Activated CD4-positive, alpha-beta T cell treated with anti-CD3 and anti-CD28 coated beads, Interleukin-2, amount 10 ng/mL, durations not matched to agents 7 days and 5 days (primary cell): ENCODE measurements at regions of chr6 and their contacts with region 1.

Region 1: GRCh38 chr6:43774776-43775534 is 4.9 kb downstream of the VEGFA start:
- DNase-seq: peak; percentile 72
- H3K4me3 Mint-ChIP-seq: no peak overlapping the region
- H3K27ac Mint-ChIP-seq: peak overlapping the region; percentile 60
- H3K4me1 Mint-ChIP-seq: peaks cover 45% of the 10 kb centered on the region
- H3K27me3 Mint-ChIP-seq: no peaks in the 10 kb centered on the region

Region 2: DNA sequence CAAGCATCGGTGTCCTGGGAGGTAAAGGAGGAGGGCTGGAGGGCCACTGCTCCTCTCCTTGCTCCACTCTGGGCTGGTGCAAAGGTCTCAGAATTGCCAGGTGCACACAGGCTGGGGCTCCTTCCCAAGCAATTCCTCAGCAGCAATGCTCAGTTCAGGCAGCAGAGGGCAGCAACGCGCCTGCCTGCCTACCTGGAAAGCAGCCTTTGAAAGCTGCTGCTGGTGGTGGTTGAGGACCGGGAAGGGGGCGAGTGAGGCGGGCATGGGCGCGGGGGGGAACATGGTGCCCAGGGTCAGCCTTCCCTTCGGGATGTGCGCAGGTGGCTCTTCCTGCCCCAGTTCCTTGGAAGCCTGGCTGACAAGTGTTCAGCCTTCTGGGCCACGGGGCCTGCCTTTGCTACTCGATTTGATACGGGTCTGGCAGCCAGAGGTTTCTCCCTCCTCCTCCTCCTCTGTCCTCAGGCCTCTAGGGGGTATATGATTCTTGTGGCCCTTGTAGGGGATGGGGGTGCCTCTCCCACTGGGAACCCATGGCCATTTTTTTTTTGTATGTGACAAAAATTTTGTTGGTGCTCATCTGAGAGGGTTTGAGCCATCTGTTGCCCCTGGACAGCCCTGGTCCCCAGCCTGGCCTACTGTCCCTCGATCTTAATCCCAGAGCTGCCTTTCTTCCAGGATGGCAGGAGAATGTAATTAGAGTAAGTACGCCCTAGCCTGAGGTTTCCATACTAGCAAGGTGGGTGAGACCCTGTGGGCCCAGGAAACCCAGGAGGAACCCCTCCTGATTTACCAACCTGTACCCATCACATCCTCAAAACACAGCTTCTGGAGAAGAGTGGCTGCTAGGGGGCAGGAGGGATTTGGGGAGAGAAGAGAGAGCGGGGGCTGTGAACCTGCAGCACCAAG is 107.5 kb before region 1 on chr6:
- CTCF ChIA-PET with region 1: interaction called, 11 read pairs
- POLR2A ChIA-PET with region 1: interaction called, 3 read pairs
- DNase-seq: peak; percentile 74
- H3K4me3 Mint-ChIP-seq: no peak overlapping the region
- H3K27ac Mint-ChIP-seq: peak overlapping the region; percentile 69
- H3K4me1 Mint-ChIP-seq: peaks cover 47% of the 10 kb centered on the region
- H3K27me3 Mint-ChIP-seq: no peaks in the 10 kb centered on the region

Region 3: DNA sequence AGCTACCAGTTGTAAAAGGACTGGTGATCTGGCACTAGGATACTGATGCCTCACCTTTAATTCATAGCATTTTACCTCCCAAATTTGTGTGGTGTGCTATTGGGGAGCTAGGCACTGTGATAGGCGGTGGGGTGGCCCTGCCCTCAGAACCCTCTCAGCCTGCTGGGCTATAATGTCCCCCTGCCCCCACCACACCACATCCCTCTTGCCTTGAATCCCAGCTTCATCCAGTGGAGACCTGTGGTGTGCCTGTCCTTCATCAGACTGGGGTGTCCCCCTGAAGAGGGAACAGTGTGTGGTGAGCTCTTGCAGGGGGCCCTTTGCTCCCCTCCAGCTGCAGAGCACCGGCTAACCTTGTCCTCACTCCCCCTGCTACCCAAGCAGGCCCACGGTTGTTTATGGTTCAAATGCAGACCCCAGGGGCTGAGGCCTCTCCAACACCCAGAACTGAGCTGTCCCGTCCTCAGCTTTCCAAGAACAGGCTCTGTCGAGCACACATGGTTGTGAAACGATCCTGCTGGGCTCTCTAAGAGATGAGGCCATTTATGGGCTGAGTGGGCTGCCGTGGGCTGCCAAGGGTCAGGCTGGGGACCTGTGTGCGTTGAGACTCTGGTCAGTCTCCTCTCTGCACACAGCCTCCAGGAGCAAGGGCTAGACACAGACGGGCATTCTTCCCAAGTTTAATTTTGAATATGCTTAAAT is 31.9 kb before region 1 on chr6:
- CTCF ChIA-PET with region 1: interaction called, 12 read pairs
- POLR2A ChIA-PET with region 1: no interaction called
- DNase-seq: no peak
- H3K4me3 Mint-ChIP-seq: no peak overlapping the region
- H3K27ac Mint-ChIP-seq: no peak overlapping the region
- H3K4me1 Mint-ChIP-seq: no peaks in the 10 kb centered on the region
- H3K27me3 Mint-ChIP-seq: peaks cover 14% of the 10 kb centered on the region

Region 4: DNA sequence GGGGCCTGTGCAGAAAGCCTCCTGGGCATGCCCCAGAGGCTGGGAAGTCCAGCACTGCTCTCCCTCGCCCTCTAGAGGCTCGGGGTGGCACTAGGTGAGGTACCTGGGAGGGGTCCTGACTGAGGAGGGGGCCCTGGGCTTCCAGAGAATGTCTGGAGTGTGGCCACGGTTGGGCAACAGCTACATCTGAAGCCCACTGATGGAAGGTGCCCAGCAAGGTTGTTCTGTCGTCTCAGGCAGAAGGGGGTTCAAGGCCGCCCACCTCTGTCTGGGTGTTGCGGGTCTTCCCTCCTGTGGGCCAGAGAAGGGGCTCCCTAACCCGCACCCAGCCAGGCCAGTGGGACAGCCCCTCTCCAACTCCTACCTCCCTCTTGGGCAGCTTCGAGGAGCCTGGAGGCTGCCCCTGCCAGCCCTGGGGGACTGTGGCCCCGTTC is 16.3 kb before region 1 on chr6:
- CTCF ChIA-PET with region 1: interaction called, 24 read pairs
- POLR2A ChIA-PET with region 1: no interaction called
- DNase-seq: no peak
- H3K4me3 Mint-ChIP-seq: no peak overlapping the region
- H3K27ac Mint-ChIP-seq: no peak overlapping the region
- H3K4me1 Mint-ChIP-seq: no peaks in the 10 kb centered on the region
- H3K27me3 Mint-ChIP-seq: peaks cover 7% of the 10 kb centered on the region